Endothelial cell of umbilical vein (primary cell): ENCODE measurements at regions of chrX and their contacts with region 1.

Region 1: GRCh38 chrX:27186664-27187063 is 276.5 kb downstream of the PPP4R3C start:
- DNase-seq: peak; percentile 28
- H3K4me3 ChIP-seq: no peak overlapping the region
- H3K27ac ChIP-seq: no peak overlapping the region
- H3K4me1 ChIP-seq: no peaks in the 10 kb centered on the region
- H3K27me3 ChIP-seq: no peaks in the 10 kb centered on the region
- CTCF ChIP-seq: peak; percentile 48 to 49
- POLR2A ChIP-seq: no peak

Region 2: GRCh38 chrX:26295425-26295824 is 891.2 kb before region 1 on chrX:
- CTCF ChIA-PET with region 1: no interaction called
- POLR2A ChIA-PET with region 1: no interaction called
- dilution Hi-C with region 1: no loop called
- intact Hi-C with region 1: loop called (anchors 5 kb)
- DNase-seq: peak; percentile 28
- H3K4me3 ChIP-seq: no peak overlapping the region
- H3K27ac ChIP-seq: no peak overlapping the region
- H3K4me1 ChIP-seq: no peaks in the 10 kb centered on the region
- H3K27me3 ChIP-seq: no peaks in the 10 kb centered on the region
- CTCF ChIP-seq: no peak
- POLR2A ChIP-seq: no peak

Region 3: GRCh38 chrX:26442340-26442739 is 744.3 kb before region 1 on chrX:
- CTCF ChIA-PET with region 1: no interaction called
- POLR2A ChIA-PET with region 1: no interaction called
- dilution Hi-C with region 1: no loop called
- intact Hi-C with region 1: loop called (anchors 2 kb)
- DNase-seq: peak; percentile 68
- H3K4me3 ChIP-seq: no peak overlapping the region
- H3K27ac ChIP-seq: no peak overlapping the region
- H3K4me1 ChIP-seq: no peaks in the 10 kb centered on the region
- H3K27me3 ChIP-seq: no peaks in the 10 kb centered on the region
- CTCF ChIP-seq: peak in 1 of 2 donors; percentile 39
- POLR2A ChIP-seq: no peak

Region 4: GRCh38 chrX:26649534-26649933 is 537.1 kb before region 1 on chrX:
- CTCF ChIA-PET with region 1: interaction called, 3 read pairs
- POLR2A ChIA-PET with region 1: no interaction called
- dilution Hi-C with region 1: no loop called
- intact Hi-C with region 1: loop called (anchors 1 kb)
- DNase-seq: no peak
- H3K4me3 ChIP-seq: no peak overlapping the region
- H3K27ac ChIP-seq: no peak overlapping the region
- H3K4me1 ChIP-seq: no peaks in the 10 kb centered on the region
- H3K27me3 ChIP-seq: no peaks in the 10 kb centered on the region
- CTCF ChIP-seq: peak; percentile 8 to 21
- POLR2A ChIP-seq: no peak

Region 5: DNA sequence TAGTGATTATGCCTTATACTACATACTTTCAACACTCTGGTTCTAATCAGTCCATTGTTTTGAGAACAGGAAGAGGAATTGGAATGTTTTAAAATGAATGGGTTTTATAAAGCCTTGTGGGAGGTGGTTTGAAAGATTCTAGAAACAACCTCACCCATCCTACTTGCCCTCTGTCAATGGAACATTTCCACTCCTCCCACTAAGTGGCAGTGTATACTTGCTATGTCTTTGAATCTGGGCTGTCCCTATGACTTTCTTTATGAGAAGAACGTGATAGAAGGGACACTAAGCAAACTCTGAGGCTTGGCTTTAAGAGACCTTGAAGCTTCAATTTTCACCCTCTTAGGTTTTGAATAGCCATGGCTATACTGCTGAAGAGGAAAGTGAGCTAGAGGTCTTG is 334.7 kb before region 1 on chrX:
- CTCF ChIA-PET with region 1: interaction called, 18 read pairs
- POLR2A ChIA-PET with region 1: no interaction called
- dilution Hi-C with region 1: no loop called
- intact Hi-C with region 1: loop called (anchors 1 kb)
- DNase-seq: peak; percentile 87
- H3K4me3 ChIP-seq: no peak overlapping the region
- H3K27ac ChIP-seq: peak overlapping the region; percentile 18
- H3K4me1 ChIP-seq: peaks cover 10% of the 10 kb centered on the region
- H3K27me3 ChIP-seq: no peaks in the 10 kb centered on the region
- CTCF ChIP-seq: peak; percentile 6 to 12
- POLR2A ChIP-seq: no peak

Region 6: DNA sequence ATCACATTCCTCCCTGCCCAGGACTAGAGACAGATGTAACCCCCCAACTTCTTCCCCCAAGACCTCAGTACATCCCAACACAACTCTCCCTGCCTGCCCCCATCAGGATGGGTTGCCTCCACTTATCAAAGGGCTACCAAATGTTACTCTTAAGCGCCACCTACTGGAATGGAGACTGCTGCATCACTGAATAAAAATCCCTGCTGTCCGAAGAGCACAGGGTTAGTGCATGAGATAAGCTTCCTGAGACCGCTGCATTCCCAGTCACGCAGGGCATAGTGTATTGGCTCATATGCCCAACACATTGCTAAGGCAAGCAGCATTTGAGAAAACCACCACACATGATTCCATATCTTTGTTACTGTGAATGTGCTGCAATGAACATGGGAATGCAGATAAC is 268.0 kb before region 1 on chrX:
- CTCF ChIA-PET with region 1: interaction called, 4 read pairs
- POLR2A ChIA-PET with region 1: no interaction called
- dilution Hi-C with region 1: no loop called
- intact Hi-C with region 1: loop called (anchors 5 kb)
- DNase-seq: peak; percentile 31
- H3K4me3 ChIP-seq: no peak overlapping the region
- H3K27ac ChIP-seq: no peak overlapping the region
- H3K4me1 ChIP-seq: peaks cover 36% of the 10 kb centered on the region
- H3K27me3 ChIP-seq: no peaks in the 10 kb centered on the region
- CTCF ChIP-seq: peak; percentile 17 to 26
- POLR2A ChIP-seq: no peak

Region 7: DNA sequence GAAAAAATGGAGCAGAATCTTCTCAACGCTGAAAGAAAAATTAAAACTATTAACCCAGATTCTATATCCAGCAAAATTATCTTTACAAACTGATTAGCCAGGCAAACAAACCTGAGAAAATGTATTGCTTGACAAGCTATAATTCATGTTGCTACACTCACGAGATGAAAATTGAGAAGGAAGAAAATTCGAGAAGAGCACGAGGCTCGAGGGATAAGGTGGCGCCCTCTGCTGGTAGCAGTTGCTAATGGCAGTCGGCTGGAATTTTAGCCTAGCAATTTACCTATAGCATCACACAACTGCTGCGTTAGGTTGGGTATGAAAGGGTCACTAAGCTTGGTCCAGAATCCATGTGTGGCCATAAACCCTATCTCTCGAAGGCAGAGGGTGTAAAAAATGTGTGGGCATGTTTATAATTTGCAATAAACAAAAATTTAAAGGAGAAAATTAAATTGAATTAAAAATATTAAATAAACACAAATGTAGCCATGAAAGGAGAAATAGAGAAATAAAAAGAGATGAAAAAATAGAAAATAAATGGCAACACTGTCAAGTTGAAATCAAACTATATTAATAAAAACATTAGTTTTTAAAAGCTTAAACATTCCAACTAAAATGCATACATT is 149.9 kb after region 1 on chrX:
- CTCF ChIA-PET with region 1: no interaction called
- POLR2A ChIA-PET with region 1: no interaction called
- dilution Hi-C with region 1: no loop called
- intact Hi-C with region 1: loop called (anchors 5 kb)
- DNase-seq: peak; percentile 16
- H3K4me3 ChIP-seq: no peak overlapping the region
- H3K27ac ChIP-seq: no peak overlapping the region
- H3K4me1 ChIP-seq: no peaks in the 10 kb centered on the region
- H3K27me3 ChIP-seq: no peaks in the 10 kb centered on the region
- CTCF ChIP-seq: peak; percentile 50 to 61
- POLR2A ChIP-seq: no peak